GM13977 (cell line): ENCODE measurements at regions of chr2 and their contacts with region 1.

Region 1: GRCh38 chr2:69724540-69725159 is 17.3 kb upstream of the ANXA4 start:
- DNase-seq: peak; percentile 64
- CTCF ChIP-seq: peak; percentile 87

Region 2: DNA sequence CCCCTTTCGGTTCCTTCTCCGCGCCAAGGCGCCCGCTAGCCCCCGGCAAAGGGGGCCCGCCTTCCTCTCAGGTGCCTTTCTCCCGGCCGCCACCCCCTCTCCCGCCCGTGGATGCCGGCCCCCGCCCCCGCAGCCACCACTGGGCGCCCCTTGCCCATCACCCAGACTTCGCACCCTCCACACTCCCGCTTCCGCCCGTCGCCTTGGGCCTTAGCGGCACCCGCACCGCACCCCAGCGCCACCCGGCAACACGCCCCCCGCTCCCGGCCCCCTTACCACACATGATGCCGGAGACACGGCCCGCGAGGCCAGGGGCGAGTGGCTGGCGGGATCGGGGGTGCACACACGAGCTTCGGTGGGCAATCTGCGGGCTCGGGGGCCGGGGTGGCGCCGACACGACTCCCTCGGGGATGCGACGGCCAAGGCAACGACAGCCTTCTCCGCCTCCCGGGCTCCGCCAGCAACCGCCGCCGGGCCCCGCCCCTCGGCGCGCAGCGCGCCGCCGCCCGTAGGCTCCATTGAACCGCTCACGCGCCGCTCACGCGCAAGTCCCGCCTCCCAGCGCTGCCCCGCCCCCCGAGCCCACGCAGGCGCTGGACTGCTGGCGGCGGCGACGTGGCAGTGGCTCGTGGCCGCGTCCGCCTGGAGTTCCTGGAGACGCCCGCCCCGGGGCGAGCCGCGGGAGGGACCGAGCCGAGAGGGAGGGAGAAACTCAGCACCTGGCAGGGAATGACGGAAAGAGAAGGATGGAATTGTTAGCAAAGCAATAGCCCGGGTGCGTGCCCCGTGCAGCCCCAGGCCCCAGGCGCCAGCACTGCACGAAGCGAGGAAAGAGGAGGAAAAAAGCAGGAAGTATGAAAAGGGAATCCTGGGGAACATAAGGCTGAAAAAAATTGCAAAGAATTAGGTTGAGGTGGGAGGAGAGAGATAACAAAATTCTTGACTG is 337.6 kb before region 1 on chr2 and contains the start of gene GFPT1:
- in situ Hi-C with region 1: loop called (anchors 25 kb)
- DNase-seq: peak; percentile 95
- CTCF ChIP-seq: no peak

Region 3: DNA sequence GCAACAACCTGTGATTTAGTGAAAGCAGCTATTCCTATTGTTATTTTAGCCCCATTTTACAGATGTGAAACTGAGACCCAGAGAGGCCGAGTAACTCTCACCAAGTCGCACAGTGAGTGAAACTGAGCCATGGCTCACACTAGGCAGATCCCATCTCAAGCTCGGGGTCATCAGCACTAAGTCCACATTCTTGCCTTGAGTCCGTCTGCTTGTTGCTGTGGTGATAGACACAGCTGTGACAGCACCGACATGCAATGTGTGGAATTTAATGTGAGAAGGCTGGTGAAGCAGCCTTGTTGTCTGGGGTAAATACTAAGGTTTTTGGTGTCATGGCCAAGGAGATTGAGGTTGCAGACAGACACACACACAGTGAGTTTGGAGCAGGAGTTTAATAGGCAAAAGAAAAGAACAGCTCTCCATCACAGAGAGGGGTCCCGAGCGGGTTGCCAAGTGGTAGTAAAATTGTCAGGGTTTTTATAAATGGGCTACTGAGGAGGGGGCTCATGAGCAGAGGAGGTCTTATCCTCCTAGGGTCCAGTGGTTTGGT is 64.6 kb after region 1 on chr2:
- in situ Hi-C with region 1: no loop called
- DNase-seq: no peak
- CTCF ChIP-seq: no peak

Region 4: GRCh38 chr2:69829256-69830046 is 104.8 kb after region 1 on chr2 and contains the start of gene GMCL1:
- in situ Hi-C with region 1: loop called (anchors 5 kb)
- DNase-seq: peak; percentile 93
- CTCF ChIP-seq: no peak

Region 5: DNA sequence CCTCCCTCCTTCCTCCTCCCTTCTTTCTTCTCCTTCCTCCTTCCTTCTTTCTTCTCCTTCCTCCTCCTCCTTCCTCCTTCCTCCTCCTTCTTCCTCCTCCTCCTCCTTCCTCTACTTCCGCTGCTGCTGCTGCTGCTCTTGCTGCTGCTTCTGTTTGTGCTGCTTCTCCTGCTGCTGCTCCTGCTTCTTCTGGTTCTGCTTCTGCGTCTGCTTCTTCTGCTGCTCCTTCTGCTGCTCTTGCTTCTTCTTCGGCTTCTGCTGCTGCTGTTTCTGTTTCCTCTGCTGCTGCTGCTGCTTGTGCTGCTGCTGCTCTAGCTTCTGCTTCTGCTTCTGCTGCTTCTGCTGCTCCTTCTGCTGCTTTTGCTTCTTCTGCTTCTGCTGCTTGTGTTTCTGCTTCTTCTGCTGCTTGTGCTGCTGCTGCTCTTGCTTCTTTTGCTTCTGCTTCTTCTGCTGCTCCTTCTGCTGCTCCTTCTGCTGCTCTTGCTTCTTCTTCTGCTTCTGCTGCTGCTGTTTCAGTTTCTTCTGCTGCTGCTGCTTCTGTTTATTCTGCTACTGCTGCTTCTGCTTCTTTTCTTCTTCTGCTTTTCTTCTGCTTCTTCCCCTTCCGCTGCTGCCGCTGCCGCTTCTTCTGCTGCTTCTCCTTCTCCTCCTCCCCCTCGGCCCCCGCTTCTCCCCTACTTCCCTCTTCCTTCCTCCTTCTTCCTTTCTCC is 177.7 kb after region 1 on chr2:
- in situ Hi-C with region 1: loop called (anchors 10 kb)
- DNase-seq: no peak
- CTCF ChIP-seq: no peak